ENCODE measurements at regions of chr10 and their contacts with region 1.

Region 1: DNA sequence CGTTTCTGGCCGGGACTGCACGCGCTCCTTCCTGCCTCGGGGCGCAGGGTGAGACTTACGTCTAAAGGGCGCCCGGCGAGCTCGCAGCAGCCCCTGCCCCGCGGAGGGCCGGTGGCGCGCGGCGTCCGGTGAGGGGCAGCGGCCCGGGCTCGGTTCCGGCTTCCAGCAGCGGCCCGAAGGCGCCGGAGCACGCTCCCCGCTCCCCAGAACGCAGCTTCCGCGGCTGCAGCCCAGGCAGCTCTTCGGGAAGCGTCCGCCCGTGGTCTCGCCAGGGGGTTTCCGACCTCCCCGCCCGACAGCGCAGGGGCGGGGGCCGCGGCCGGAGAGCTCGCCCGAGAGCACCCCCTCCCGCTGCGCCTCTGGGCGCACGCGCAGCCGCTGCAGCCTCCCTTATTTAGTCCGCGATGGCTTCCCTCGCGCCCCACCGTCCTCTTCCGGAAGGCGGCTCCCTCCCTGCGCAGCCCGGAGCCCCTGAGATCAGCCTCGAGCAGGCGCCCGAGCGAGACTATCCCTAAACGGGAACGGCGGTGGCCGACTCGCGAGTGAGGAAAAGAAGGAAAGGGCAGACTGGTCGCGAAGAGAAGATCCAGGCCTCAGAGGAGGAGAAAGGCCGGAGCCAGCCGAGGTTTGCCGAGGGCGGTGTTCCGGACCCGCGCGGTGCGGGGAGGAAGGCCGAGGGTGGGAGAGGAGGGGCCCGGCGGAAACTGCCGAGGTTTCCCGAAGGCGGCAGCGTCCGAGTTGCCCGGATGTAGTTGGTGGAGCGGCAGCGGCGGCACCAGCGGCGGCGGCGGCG is at the start of gene WAC:
- DNase-seq: peak; percentile 79
- ATAC-seq: peak; percentile 93
- H3K4me3 ChIP-seq: peak within 1 kb of the TSS; percentile 94 to 98 (median 98)
- H3K27ac ChIP-seq: peak within 1 kb of the TSS; percentile 99
- H3K4me1 ChIP-seq: peaks cover 44% of the 10 kb centered on the region
- H3K27me3 ChIP-seq: no peaks in the 10 kb centered on the region; a peak in 1 of 5 replicates
- CTCF ChIP-seq: 0 out of 2 replicates have a peak, but pooled peaks have one; percentile 21
- EP300 ChIP-seq: 0 out of 4 replicates have a peak, but pooled peaks of 1 of the 2 experiments have one; percentile 13
- POLR2A ChIP-seq: peak; percentile 72 to 84
- RAD21 ChIP-seq: 0 out of 2 replicates have a peak, but pooled peaks have one; percentile 19
- total RNA-seq, gene WAC: 69.1 and 70.2 TPM in 2 replicates

Region 2: DNA sequence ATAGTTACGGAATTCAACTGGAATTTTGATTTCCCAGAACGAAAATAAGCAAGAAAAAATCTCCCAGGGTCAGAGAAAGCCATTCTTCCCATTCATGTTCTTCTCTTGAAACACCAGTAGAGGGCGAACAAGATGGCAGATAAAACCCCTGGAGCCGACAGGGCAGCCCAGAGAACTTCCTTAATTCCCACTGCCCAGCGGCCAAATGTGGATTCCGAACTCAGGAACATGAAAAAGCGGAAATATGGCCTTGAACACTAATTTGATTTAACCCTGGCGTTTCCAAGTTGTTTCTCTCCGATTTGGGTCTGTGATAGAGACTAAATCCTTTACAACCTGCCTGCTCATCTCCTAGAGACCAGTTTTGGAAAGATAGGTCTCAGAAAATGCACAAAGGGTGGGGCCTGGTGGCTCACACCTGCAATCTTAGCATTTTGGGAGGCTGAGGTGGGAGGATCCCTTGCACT is 100.3 kb before region 1 on chr10:
- CTCF ChIA-PET with region 1: no interaction called
- POLR2A ChIA-PET with region 1: no interaction called
- in situ Hi-C with region 1: loop called (anchors 10 kb)
- intact Hi-C with region 1: loop called (anchors 2 kb)
- DNase-seq: peak; percentile 66
- ATAC-seq: peak; percentile 80
- H3K4me3 ChIP-seq: peak overlapping the region in 2 of 3 experiments; percentile 23 to 26; a peak in 1 of 6 replicates
- H3K27ac ChIP-seq: no peak overlapping the region
- H3K4me1 ChIP-seq: peaks cover 15% of the 10 kb centered on the region
- H3K27me3 ChIP-seq: peaks cover 2 to 7% of the 10 kb centered on the region in 2 experiments; a peak in 2 of 5 replicates
- CTCF ChIP-seq: peak; percentile 73
- EP300 ChIP-seq: no peak
- POLR2A ChIP-seq: no peak
- RAD21 ChIP-seq: 0 out of 2 replicates have a peak, but pooled peaks have one; percentile 36

Region 3: DNA sequence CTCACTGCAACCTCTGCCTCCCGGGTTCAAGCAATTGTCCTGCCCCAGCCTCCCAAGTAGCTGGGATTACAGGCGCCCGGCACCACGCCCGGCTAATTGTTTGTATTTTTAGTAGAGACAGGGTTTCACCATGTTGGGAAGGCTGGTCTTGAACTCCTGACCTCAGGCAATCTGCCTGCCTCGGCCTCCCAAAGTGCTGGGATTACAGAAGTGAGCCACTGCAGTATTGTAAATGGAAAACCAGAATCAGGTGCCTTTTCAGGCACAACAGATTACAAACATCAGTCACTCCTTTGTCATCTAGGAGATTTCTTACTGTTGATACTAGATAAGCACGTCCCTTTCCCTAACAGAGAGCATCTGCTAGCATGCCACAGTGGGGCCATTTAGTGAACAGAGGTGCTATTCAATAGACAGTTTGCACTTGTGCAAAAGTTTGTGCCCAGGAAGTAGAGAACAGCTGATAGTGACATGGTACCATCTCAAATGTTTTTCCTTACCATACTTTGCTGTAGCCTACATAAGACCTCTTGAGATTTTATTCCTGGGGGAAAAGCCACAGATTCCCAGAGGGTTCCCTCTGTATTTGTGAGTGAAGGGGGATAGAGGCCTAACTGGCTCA is 24.2 kb before region 1 on chr10:
- CTCF ChIA-PET with region 1: no interaction called
- POLR2A ChIA-PET with region 1: no interaction called
- in situ Hi-C with region 1: no loop called
- intact Hi-C with region 1: loop called (anchors 1 kb)
- DNase-seq: peak; percentile 67
- ATAC-seq: peak; percentile 57
- H3K4me3 ChIP-seq: no peak overlapping the region
- H3K27ac ChIP-seq: no peak overlapping the region
- H3K4me1 ChIP-seq: peaks cover 7% of the 10 kb centered on the region; the same call in 1 of the 2 replicates
- H3K27me3 ChIP-seq: 0 out of 5 replicates have a peak, but pooled peaks cover 0 to 4% of the 10 kb centered on the region in 2 experiments
- CTCF ChIP-seq: no peak
- EP300 ChIP-seq: no peak
- POLR2A ChIP-seq: no peak
- RAD21 ChIP-seq: no peak

Region 4: DNA sequence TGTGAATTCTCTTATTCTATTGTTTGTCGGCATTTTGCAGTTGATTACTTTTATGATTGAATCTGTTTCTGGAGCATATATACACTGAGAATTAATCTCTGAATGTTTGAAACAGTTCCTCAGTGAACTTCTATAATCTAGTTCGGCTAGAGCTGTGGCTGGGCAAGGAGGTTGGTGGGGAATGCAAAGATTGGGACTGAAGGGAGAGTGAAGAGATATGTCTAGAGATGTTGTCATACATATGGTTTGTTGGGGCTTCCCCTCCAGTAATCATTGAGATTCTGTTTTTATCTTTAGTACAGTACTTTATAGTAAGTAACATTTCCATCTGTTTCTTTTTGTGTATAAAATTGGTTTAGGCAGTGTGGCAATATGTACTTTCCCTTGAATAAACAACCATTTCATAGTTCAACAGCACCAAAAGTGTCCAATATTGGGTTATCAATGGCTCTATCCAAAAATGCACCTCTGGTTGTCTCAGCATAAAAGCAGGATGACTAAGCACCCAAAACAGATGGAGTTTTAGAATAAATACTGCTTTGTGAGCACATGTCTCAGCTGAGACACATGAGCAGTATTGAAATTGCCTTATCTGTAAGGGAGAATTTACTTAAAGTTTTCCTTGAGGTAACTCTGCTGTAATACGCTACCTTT is 37.1 kb after region 1 on chr10:
- CTCF ChIA-PET with region 1: no interaction called
- POLR2A ChIA-PET with region 1: interaction called, 11 read pairs
- in situ Hi-C with region 1: no loop called
- intact Hi-C with region 1: no loop called
- DNase-seq: peak; percentile 66
- ATAC-seq: peak; percentile 68
- H3K4me3 ChIP-seq: no peak overlapping the region
- H3K27ac ChIP-seq: no peak overlapping the region
- H3K4me1 ChIP-seq: peaks cover 69% of the 10 kb centered on the region
- H3K27me3 ChIP-seq: no peaks in the 10 kb centered on the region; a peak in 1 of 5 replicates
- CTCF ChIP-seq: no peak
- EP300 ChIP-seq: peak in 1 of 2 experiments; percentile 13; a peak in 1 of 4 replicates
- POLR2A ChIP-seq: no peak
- RAD21 ChIP-seq: no peak